AG04450 (cell line): ENCODE measurements at regions of chr6 and their contacts with region 1.

Region 1: DNA sequence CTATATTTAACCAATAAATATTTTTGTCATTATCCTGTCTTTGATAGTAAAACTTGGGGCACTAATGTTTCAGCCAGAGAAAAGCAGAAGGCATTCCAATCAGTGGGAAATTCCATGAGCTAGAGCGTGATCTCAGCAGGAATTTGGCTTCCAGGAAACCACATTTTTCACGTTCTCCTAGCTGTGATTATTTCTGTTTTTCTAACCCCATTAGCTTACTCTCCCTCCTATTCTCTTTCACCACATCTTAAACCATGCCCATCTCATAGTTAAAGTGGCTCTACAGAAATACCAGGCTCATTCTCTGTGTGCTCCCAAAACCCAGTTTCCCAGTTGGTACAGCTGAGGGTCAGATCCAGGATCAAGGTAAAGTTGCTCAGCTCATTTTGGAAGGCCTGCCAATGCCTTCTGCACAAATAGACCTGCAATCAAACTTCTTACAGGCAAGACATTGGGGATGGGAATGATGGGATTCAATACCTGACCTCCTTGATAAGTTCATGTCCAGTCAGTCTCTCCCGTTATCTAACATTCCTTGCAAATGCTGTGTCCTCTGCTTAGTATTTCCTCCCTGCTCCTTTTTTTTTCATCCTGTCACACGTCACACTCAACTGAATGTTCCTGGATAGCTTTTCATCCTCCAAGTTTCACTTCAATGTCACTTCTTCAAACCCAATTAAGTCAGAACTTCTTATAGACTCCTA is 33.1 kb upstream of the TMEM30A start:
- DNase-seq: no peak
- H3K4me3 ChIP-seq: no peak overlapping the region
- H3K27ac ChIP-seq: no peak overlapping the region
- H3K27me3 ChIP-seq: no peaks in the 10 kb centered on the region
- CTCF ChIP-seq: no peak

Region 2: DNA sequence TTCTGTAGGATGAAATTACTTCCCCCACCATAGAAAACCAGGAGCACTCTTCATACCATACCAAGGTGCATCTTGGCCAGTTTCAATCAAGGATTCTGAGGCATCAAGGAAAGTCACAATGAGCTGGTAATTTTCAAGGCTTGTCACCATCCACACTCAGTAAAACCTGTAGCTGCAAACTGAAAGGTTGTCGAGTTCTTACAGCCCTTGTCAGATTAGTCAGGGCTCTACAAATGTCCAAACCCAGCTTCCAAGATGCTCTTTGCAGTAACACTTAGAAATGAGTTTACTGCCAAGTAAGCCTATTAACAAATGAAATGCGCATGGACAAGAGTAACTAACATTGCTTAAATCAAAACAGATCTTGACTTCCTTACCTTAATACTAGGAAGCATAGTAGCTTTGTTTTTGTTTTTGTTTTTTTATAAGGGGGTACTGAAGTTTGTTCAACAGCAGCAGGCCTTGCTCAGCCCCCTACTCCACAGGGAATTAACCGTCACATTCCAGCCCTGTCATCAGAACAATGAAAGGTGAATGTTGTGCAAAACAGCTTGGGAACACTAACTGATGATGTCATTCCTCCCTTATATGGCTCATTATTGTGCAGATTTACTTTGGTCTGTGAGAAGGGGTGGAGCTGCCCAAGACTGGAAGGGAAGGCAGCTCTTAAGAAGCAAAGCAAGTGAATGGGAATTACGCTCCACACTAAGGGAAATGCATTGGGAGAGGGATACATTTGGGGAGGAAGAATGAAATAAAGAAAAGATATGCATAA is 16.8 kb after region 1 on chr6:
- CTCF ChIA-PET with region 1: no interaction called
- POLR2A ChIA-PET with region 1: interaction called, 12 read pairs
- DNase-seq: peak; percentile 27
- H3K4me3 ChIP-seq: no peak overlapping the region
- H3K27ac ChIP-seq: no peak overlapping the region
- H3K27me3 ChIP-seq: no peaks in the 10 kb centered on the region
- CTCF ChIP-seq: no peak